OCI-LY7 (cell line): ENCODE measurements at regions of chr15 and their contacts with region 1.

Region 1: DNA sequence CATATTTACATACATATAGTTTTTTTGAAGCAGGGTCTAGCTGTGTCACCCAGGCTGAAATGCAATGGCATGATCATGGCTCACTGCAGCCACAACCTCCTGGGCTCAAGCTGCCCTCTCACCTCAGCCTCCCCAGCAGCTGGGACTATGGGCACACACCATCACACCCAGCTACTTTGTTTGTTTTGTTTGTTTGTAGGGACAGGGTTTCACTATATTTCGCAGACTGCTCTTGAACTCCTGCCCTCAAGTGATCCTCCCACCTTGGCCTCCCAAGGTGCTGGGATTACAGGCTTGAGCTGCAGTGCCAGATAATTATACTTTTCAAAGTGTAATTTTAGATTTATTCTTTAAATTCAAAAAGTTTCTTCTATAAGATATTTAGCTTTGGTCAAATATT is 10.2 kb downstream of the GTF2A2 start:
- DNase-seq: no peak
- H3K4me3 ChIP-seq: no peak overlapping the region
- H3K27ac ChIP-seq: no peak overlapping the region
- H3K4me1 ChIP-seq: no peaks in the 10 kb centered on the region
- CTCF ChIP-seq: no peak

Region 2: GRCh38 chr15:59299929-59300617 is 347.0 kb before region 1 on chr15:
- CTCF ChIA-PET with region 1: no interaction called
- POLR2A ChIA-PET with region 1: interaction called, 13 read pairs
- intact Hi-C with region 1: no loop called
- DNase-seq: peak; percentile 87
- H3K4me3 ChIP-seq: peak overlapping the region; percentile 26
- H3K27ac ChIP-seq: no peak overlapping the region
- H3K4me1 ChIP-seq: peaks cover 32% of the 10 kb centered on the region
- CTCF ChIP-seq: no peak

Region 3: GRCh38 chr15:59741274-59741906 is 94.3 kb after region 1 on chr15:
- CTCF ChIA-PET with region 1: no interaction called
- POLR2A ChIA-PET with region 1: no interaction called
- intact Hi-C with region 1: no loop called
- DNase-seq: no peak
- H3K4me3 ChIP-seq: no peak overlapping the region
- H3K27ac ChIP-seq: no peak overlapping the region
- H3K4me1 ChIP-seq: no peaks in the 10 kb centered on the region
- CTCF ChIP-seq: peak; percentile 53